ENCODE measurements at regions of chr1 and their contacts with region 1.

Region 1: GRCh38 chr1:210292231-210292871 is 36.4 kb upstream of the HHAT start:
- DNase-seq: peak in 1 of 2 donors; percentile 70
- H3K4me3 ChIP-seq: peak overlapping the region; percentile 47 to 64
- H3K27ac ChIP-seq: peak overlapping the region; percentile 88 to 93
- H3K4me1 ChIP-seq: peaks cover 14 to 31% of the 10 kb centered on the region in 2 donors
- H3K27me3 ChIP-seq: no peaks in the 10 kb centered on the region
- CTCF ChIP-seq: peak in 2 of 3 experiments; percentile 22 to 45

Region 2: GRCh38 chr1:210233216-210234020 is 58.9 kb before region 1 on chr1:
- intact Hi-C with region 1: loop called (anchors 1 kb)
- DNase-seq: peak in 1 of 2 donors; percentile 72
- H3K4me3 ChIP-seq: peak overlapping the region; percentile 87 to 90
- H3K27ac ChIP-seq: peak overlapping the region; percentile 91 to 92
- H3K4me1 ChIP-seq: peaks cover 7 to 35% of the 10 kb centered on the region in 2 donors
- H3K27me3 ChIP-seq: no peaks in the 10 kb centered on the region
- CTCF ChIP-seq: no peak

Region 3: GRCh38 chr1:210239349-210240111 is 52.8 kb before region 1 on chr1:
- intact Hi-C with region 1: loop called (anchors 1 kb)
- DNase-seq: peak in 1 of 2 donors; percentile 79
- H3K4me3 ChIP-seq: no peak overlapping the region
- H3K27ac ChIP-seq: peak overlapping the region; percentile 62 to 66
- H3K4me1 ChIP-seq: peaks cover 3 to 55% of the 10 kb centered on the region in 2 donors
- H3K27me3 ChIP-seq: no peaks in the 10 kb centered on the region
- CTCF ChIP-seq: peak in 2 of 3 experiments; percentile 40 to 45

Region 4: DNA sequence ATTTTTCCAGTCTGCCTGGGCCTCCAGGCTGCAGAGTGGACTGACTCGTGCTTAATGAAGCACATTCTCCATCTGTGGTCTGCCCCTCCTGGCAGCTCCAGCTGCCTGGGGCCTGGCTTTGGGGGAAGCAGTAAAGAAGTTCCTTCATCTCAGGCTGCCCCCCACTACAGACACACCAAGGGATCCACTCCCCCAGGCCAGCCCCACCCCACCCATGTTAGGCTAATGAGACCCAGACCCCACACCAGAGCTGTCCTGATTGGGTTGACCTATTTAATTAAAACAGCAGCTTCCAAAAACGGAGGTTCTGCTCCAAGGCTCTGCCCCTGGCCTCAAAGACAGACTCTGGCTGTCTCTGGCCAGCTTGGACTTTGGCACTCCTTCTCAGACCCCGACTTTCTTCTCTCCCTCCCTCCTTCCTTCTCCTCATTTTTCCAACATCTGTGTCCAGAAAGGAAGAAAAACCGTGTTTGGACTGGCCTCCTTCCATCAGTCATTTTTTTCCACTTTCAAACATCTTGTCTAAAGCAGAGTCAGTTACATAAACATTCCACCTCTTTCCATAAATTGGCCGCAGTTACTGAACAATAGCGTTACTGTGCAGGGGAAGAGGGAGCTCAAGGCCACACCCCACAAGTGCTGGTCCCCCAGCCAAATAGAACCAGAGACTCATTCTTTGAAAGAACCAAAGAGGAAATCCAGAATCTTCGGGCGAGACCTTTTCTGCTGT is 30.0 kb before region 1 on chr1:
- intact Hi-C with region 1: loop called (anchors 2 kb)
- DNase-seq: peak in 1 of 2 donors; percentile 76
- H3K4me3 ChIP-seq: peak overlapping the region in 1 of 2 donors; percentile 25
- H3K27ac ChIP-seq: peak overlapping the region; percentile 80 to 84
- H3K4me1 ChIP-seq: peaks cover 13 to 43% of the 10 kb centered on the region in 2 donors
- H3K27me3 ChIP-seq: no peaks in the 10 kb centered on the region
- CTCF ChIP-seq: no peak

Region 5: DNA sequence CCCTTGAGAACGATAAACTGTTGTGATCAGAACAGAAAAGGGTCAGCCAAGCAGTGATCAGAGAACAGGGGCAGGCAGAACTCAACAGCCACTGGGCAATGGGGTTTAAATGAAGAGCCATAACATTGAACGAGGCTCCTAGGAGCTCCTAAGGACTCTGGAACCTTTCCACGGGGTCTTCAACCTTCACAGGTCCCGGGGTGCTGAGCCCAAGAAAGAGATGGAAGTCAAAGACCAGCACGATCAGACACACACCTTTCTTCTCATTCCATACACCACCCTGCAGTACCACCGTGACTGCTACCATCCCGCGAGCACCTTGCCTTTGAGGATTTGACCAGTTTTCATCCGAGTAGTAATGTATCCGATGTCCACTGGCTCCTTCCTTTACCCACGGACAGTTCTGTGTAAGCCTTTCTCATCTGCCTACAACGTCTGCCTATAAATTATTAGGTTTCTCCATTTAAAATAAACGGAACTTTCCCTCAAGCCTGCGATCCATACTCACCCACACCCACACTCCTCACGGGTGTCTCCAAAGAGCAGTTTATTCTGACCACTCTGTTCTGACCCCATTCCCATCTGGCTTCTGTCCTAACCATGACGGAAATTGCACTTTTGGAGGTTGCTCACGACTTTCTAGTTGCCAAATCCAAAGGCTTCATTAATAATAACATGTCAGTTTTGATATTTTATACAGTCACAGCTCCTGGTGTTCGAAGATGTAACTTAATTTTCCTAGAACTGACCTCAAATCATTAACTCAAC is 19.6 kb after region 1 on chr1:
- intact Hi-C with region 1: loop called (anchors 2 kb)
- DNase-seq: no peak
- H3K4me3 ChIP-seq: peak overlapping the region; percentile 42 to 69
- H3K27ac ChIP-seq: peak overlapping the region; percentile 41 to 73
- H3K4me1 ChIP-seq: peaks cover 0 to 5% of the 10 kb centered on the region in 2 donors
- H3K27me3 ChIP-seq: no peaks in the 10 kb centered on the region
- CTCF ChIP-seq: no peak

Region 6: DNA sequence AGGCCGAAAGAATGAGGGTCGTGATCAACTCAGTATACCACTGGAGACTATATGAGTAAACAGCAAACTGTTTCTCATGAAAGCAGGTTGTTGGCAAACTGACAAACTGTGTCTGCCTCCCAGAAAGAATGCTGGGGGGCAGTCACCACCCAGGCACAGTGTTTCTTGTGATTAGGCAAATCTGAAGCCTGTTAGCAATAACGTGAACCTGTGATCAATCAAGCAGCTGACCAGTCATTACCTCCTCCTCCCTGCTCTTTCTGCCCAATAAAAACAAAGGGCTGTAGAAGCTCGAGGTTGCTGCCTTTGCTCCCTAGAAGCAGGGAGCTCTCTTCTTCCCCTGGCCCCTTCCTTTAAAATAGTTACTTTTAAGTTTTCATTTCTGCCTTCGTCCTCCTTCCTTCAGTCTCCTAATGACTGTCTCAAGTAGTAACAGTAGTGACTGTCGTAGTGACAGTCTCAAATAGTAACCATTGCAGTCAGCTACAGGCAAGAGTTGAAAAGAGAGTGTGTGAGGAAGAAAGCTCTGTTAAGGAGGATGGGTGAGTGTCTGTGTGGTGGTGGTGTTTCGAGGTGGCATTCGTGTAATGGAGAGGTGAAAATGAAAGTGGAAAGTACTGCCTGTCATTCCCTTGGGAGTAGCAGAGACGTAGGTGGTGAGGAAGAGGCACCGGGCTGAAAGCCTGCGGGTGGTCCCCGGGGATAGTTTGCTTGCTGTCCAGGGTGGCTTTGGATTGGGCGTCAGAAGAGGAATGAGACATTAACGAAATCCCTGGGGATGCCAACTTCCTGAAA is 50.8 kb after region 1 on chr1:
- intact Hi-C with region 1: loop called (anchors 1 kb)
- DNase-seq: no peak
- H3K4me3 ChIP-seq: peak overlapping the region; percentile 38 to 53
- H3K27ac ChIP-seq: peak overlapping the region; percentile 14 to 48
- H3K4me1 ChIP-seq: peaks cover 0 to 7% of the 10 kb centered on the region in 2 donors
- H3K27me3 ChIP-seq: no peaks in the 10 kb centered on the region
- CTCF ChIP-seq: no peak

Region 7: GRCh38 chr1:210489491-210489890 is 197.1 kb after region 1 on chr1:
- intact Hi-C with region 1: no loop called
- DNase-seq: no peak
- H3K4me3 ChIP-seq: no peak overlapping the region
- H3K27ac ChIP-seq: no peak overlapping the region
- H3K4me1 ChIP-seq: no peaks in the 10 kb centered on the region
- H3K27me3 ChIP-seq: no peaks in the 10 kb centered on the region
- CTCF ChIP-seq: no peak

Region 8: DNA sequence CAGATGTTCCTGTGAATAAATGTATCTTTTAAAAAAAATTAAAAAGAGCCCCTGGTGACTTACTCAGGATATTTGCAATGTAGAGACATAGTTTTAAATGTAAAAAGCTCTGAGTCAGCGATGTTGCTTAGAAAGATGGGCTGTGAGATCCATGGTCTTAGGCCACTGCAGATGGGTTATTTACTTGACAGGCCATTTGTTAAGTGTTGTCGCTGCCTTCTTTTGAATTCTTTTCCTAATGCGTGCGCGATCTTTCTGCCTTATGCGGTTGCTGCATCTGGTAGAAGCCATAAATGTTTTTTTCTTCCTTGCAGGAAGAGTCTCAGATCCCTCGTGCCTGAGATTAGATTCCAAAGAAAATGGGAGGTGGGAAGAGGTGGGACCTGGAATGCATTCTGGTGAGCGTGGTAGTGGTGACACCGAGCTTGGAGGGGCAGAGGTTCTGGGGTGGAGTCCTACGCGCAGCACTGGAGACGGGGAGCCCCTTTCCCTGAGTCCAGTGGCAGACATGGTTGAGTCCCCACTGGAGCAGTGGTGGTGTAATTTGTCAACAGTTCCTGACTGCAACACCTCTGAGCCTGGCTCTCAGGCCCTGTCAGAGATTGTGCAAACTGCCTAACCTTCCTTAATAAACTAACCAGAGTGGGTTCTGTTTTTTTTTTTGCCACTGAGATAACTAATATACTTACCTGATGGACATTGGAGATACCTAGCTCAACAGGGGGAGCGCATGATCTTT is 233.5 kb after region 1 on chr1:
- intact Hi-C with region 1: no loop called
- DNase-seq: no peak
- H3K4me3 ChIP-seq: no peak overlapping the region
- H3K27ac ChIP-seq: no peak overlapping the region
- H3K4me1 ChIP-seq: no peaks in the 10 kb centered on the region
- H3K27me3 ChIP-seq: no peaks in the 10 kb centered on the region
- CTCF ChIP-seq: no peak